Lower lobe of right lung (tissue), 2 donors: ENCODE measurements at regions of chr5 and their contacts with region 1.

Region 1: DNA sequence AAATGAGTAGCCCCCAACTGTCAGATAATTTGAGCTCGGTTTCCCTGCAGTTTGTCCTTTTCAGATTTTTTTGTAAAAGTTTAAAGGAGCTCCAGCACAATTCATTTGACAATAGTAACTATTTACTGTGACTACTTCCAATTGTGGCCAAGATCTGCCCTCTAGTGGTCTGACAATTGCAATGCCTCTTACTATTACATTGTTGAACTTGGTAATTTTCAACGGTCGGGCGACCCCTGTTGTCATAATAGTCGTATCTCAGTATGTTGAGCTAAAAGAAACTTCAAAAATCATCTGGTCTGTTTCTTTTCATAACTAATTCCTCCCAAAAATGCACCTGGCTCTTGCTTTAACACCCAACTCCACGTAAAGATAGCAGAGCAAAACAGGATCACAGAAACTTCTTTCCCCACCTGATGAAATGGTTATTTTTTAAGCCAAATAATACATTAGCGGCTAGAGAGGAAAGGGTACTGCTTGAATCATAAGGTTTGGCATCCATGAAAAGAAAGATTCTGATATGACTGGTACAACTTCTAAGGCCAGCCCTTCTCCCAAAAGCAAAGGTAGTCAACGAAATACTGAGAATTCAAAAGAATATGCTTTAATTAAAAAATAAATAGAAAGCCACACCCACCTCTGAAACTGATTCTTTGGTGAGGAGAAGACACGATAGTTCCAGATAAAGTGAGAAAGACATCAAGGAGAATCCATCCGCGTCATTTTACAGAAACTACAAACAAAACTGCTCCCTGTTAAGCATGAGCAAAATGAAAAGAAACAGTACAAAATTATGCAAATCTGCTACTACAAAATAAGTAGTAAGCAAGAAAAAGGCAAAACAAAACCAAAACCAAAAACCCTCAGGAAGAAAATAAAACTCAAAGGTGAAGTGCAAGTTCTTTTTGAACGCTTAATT is 76.9 kb upstream of the HTR4 start:
- DNase-seq: peak; percentile 52
- ATAC-seq: peak; percentile 89 to 90
- H3K4me3 ChIP-seq: no peak overlapping the region
- H3K27ac ChIP-seq: no peak overlapping the region
- H3K4me1 ChIP-seq: peaks cover 10% of the 10 kb centered on the region
- H3K27me3 ChIP-seq: no peaks in the 10 kb centered on the region
- CTCF ChIP-seq: peak; percentile 91

Region 2: DNA sequence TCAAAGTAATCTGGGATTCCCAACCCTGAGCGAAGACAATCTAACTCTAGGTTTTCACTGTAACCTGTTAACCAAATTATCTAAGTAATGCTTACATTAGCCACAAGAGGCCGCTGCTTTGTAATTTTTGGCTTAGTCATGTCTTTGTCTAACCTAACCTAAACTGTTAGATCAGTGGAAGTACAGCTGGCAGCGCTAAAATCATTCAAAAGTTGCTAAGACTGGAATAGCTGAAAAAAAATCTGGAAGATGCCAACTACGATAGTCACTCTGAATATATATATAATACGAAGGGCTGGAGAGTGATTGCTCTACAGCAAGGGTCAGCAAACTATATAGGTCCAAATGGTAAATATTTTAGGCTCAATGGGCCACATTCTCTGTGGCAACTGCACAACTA is 287.2 kb before region 1 on chr5:
- intact Hi-C with region 1: loop called (anchors 5 kb)
- DNase-seq: no peak
- ATAC-seq: peak; percentile 82 to 88
- H3K4me3 ChIP-seq: no peak overlapping the region
- H3K27ac ChIP-seq: no peak overlapping the region
- H3K4me1 ChIP-seq: peaks cover 4% of the 10 kb centered on the region
- H3K27me3 ChIP-seq: no peaks in the 10 kb centered on the region
- CTCF ChIP-seq: peak; percentile 75

Region 3: GRCh38 chr5:148632255-148633066 is 98.7 kb before region 1 on chr5:
- intact Hi-C with region 1: no loop called
- DNase-seq: no peak
- ATAC-seq: no peak
- H3K4me3 ChIP-seq: no peak overlapping the region
- H3K27ac ChIP-seq: no peak overlapping the region
- H3K4me1 ChIP-seq: no peaks in the 10 kb centered on the region
- H3K27me3 ChIP-seq: no peaks in the 10 kb centered on the region
- CTCF ChIP-seq: no peak

Region 4: DNA sequence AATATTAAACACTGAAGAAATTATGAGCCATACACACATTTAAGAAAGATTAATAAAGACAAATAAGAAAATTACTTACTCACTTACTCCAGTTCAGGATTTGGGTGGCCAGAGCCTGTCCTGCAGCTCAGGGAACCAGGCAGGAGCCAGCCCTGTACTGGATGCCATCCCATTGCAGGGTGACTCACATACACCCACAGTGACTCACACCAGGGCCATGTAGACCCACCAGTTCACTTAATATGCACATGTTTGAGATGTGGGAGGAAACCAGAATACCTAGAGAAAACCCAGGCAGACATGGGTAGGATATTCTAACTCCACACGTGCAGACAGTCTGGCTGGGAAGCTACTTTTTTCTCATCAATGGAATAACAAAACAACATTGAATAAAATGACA is 45.6 kb after region 1 on chr5:
- intact Hi-C with region 1: no loop called
- DNase-seq: no peak
- ATAC-seq: peak; percentile 51 to 59
- H3K4me3 ChIP-seq: no peak overlapping the region
- H3K27ac ChIP-seq: no peak overlapping the region
- H3K4me1 ChIP-seq: no peaks in the 10 kb centered on the region
- H3K27me3 ChIP-seq: no peaks in the 10 kb centered on the region
- CTCF ChIP-seq: no peak

Region 5: DNA sequence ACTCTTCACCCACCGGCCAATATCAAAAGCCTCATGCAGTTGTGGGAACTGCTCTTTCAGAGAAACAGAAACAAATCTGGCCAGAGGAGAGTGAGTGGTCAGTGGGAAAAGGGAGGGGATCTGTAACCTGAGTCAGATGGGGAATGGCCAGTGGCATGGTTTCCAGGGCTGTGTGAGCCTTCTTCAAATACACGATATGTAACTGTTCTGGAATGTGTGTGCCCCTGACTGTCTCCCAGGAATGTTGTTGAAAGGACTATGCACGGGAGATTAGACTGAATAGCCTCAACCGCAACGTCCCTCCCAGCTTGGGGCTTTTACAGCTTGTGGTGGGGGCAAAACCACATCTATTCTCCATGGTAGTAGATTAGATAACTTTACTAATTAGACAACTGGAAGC is 270.9 kb after region 1 on chr5:
- intact Hi-C with region 1: loop called (anchors 10 kb)
- DNase-seq: no peak
- ATAC-seq: peak; percentile 86 to 89
- H3K4me3 ChIP-seq: no peak overlapping the region
- H3K27ac ChIP-seq: no peak overlapping the region
- H3K4me1 ChIP-seq: peaks cover 7% of the 10 kb centered on the region
- H3K27me3 ChIP-seq: no peaks in the 10 kb centered on the region
- CTCF ChIP-seq: no peak

Region 6: GRCh38 chr5:149079883-149080282 is 348.7 kb after region 1 on chr5:
- intact Hi-C with region 1: no loop called
- DNase-seq: no peak
- ATAC-seq: no peak
- H3K4me3 ChIP-seq: no peak overlapping the region
- H3K27ac ChIP-seq: no peak overlapping the region
- H3K4me1 ChIP-seq: no peaks in the 10 kb centered on the region
- H3K27me3 ChIP-seq: no peaks in the 10 kb centered on the region
- CTCF ChIP-seq: no peak

Region 7: DNA sequence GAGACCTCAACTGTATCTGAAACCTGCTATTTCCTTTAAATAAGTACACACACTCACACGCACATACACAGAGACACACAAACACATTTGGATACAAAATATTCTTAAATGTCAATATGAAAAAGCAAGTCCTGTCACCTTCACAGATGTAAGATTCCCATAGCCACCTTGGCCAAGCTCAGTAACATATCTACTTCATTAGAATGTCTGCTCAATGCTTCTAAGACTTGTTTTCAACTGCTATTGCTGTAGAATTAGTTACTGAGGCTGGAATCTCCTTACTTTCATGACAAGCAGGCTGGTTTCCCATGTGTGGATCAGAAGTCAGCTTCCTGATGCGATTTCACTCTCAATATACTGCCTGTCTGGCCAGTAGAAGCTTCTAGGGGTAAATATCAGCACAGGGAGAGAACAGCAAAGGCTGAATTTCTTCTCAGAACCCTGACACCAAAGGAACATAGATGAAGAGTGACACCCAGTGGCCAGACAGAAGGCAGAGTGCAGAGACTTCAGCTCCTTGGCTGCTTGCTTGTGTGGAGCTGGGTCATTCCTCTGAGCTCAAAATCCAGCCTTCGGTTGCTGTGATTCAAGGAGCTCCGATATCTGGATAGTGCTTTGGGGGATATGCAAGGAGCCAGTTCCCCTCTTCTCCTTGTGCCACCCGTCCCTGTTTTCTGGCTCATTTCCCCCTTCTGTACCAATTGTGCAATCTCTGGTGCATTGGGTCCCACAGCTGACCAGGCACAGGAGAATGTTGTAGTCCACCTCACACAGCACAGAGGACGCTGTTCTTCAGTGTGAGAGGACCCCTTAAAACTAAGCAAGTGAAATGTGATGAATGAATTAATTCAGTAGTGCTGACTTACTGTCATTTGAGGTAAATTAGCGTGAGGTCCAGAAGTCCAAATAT is 383.5 kb after region 1 on chr5:
- intact Hi-C with region 1: loop called (anchors 5 kb)
- DNase-seq: no peak
- ATAC-seq: peak; percentile 86 to 91
- H3K4me3 ChIP-seq: no peak overlapping the region
- H3K27ac ChIP-seq: no peak overlapping the region
- H3K4me1 ChIP-seq: peaks cover 6% of the 10 kb centered on the region
- H3K27me3 ChIP-seq: no peaks in the 10 kb centered on the region
- CTCF ChIP-seq: peak; percentile 82